Activated CD8-positive, alpha-beta T cell treated with anti-CD3 and anti-CD28 coated beads for 36 hours (primary cell): ENCODE measurements at regions of chr19 and their contacts with region 1.

Region 1: DNA sequence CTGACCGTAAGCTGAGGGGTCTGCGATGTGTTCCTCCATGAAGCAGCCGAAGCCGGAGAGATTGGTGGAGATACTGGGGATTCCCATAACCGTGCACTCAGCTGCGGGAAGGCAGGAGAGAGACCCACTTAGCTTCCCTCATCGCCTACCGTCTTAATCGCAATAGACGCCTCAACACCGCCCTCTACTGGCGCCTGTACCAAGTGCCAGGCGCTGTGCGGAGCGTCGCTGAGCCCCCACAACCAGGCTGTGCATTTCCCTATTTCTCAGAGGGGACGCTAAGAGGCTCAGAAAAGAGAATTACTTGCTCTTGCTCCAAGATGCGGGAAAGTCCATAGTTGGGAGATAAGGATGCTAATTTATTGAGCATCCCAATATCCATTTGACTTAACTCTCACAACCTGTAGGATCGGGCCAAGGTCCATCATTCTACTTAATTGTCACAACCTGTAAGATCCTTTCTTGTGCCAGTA is 5.8 kb downstream of the FTL start:
- DNase-seq: peak; percentile 93
- ATAC-seq: peak; percentile 83
- H3K4me3 Mint-ChIP-seq: no peak overlapping the region
- H3K27ac Mint-ChIP-seq: peak overlapping the region; percentile 46
- H3K4me1 Mint-ChIP-seq: peaks cover 20% of the 10 kb centered on the region
- H3K27me3 Mint-ChIP-seq: no peaks in the 10 kb centered on the region
- CTCF ChIP-seq: peak; percentile 95

Region 2: GRCh38 chr19:48835734-48836088 is 135.2 kb before region 1 on chr19:
- CTCF ChIA-PET with region 1: interaction called, 12 read pairs
- POLR2A ChIA-PET with region 1: no interaction called
- intact Hi-C with region 1: no loop called
- DNase-seq: peak; percentile 100
- ATAC-seq: peak; percentile 88
- H3K4me3 Mint-ChIP-seq: peak overlapping the region; percentile 78
- H3K27ac Mint-ChIP-seq: peak overlapping the region; percentile 86
- H3K4me1 Mint-ChIP-seq: peaks cover 14% of the 10 kb centered on the region
- H3K27me3 Mint-ChIP-seq: peaks cover 5% of the 10 kb centered on the region
- CTCF ChIP-seq: peak; percentile 70

Region 3: DNA sequence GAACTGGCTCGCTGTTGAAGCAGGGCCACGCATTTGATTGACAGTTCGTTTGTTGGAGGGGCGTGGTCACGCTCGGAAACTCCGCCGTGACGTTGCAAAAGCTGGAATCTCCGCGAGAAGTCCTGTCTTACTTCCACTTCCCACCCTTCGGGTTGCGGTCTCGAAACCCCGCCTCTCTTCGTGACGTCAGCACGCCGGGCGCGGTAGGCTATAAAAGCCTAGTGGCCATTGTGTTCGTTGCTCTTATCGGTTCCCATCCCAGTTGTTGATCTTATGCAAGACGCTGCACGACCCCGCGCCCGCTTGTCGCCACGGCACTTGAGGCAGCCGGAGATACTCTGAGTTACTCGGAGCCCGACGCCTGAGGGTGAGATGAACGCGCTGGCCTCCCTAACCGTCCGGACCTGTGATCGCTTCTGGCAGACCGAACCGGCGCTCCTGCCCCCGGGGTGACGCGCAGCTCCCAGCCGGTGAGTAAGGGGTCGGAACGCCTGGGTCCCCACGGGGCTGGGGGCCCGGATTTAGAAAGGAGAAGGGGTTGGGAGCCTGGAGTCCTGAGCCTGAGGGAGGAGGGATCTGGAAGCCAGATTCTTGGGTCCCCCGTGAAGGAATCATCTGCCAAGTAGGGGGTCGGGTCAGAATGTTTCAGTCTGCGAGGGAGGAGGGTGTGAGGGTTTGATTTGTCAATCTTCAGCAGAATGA is 98.6 kb before region 1 on chr19 and contains the start of gene PPP1R15A:
- CTCF ChIA-PET with region 1: interaction called, 18 read pairs
- POLR2A ChIA-PET with region 1: interaction called, 53 read pairs
- intact Hi-C with region 1: loop called (anchors 10 kb)
- DNase-seq: peak; percentile 99
- ATAC-seq: peak; percentile 48
- H3K4me3 Mint-ChIP-seq: peak within 1 kb of the TSS; percentile 99
- H3K27ac Mint-ChIP-seq: peak within 1 kb of the TSS; percentile 100
- H3K4me1 Mint-ChIP-seq: peaks cover 40% of the 10 kb centered on the region
- H3K27me3 Mint-ChIP-seq: peaks cover 2% of the 10 kb centered on the region
- CTCF ChIP-seq: no peak
- total RNA-seq, gene PPP1R15A: 77.8 to 81.2 TPM

Region 4: GRCh38 chr19:48933382-48933932 is 37.5 kb before region 1 on chr19 and contains the start of gene DHDH:
- CTCF ChIA-PET with region 1: interaction called, 16 read pairs
- POLR2A ChIA-PET with region 1: interaction called, 3 read pairs
- intact Hi-C with region 1: no loop called
- DNase-seq: peak; percentile 89
- ATAC-seq: peak; percentile 91
- H3K4me3 Mint-ChIP-seq: peak within 1 kb of the TSS; percentile 77
- H3K27ac Mint-ChIP-seq: peak within 1 kb of the TSS; percentile 46
- H3K4me1 Mint-ChIP-seq: peaks cover 14% of the 10 kb centered on the region
- H3K27me3 Mint-ChIP-seq: peaks cover 3% of the 10 kb centered on the region
- CTCF ChIP-seq: no peak
- total RNA-seq, gene DHDH: 1.4 to 2.8 TPM

Region 5: DNA sequence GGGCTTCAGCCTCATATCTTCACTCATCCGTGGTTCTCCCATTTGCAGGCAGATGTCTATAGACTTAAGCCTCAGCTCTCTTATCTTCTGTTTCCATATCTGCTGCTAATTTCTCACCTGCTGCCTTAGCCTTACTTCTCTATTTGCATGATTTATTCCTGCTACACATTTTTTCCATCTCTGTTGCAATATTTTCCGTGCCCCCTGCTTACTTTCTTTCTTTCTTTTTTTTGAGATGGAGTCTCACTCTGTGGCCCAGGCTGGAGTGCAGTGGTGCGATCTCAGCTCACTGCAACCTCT is 16.4 kb after region 1 on chr19:
- CTCF ChIA-PET with region 1: interaction called, 101 read pairs
- POLR2A ChIA-PET with region 1: interaction called, 8 read pairs
- intact Hi-C with region 1: no loop called
- DNase-seq: no peak
- ATAC-seq: peak; percentile 44
- H3K4me3 Mint-ChIP-seq: no peak overlapping the region
- H3K27ac Mint-ChIP-seq: peak overlapping the region; percentile 70
- H3K4me1 Mint-ChIP-seq: peaks cover 29% of the 10 kb centered on the region
- H3K27me3 Mint-ChIP-seq: no peaks in the 10 kb centered on the region
- CTCF ChIP-seq: no peak

Region 6: GRCh38 chr19:49019242-49019932 is 48.4 kb after region 1 on chr19:
- CTCF ChIA-PET with region 1: no interaction called
- POLR2A ChIA-PET with region 1: no interaction called
- intact Hi-C with region 1: no loop called
- DNase-seq: peak; percentile 68
- ATAC-seq: peak; percentile 52
- H3K4me3 Mint-ChIP-seq: peak overlapping the region; percentile 55
- H3K27ac Mint-ChIP-seq: peak overlapping the region; percentile 36
- H3K4me1 Mint-ChIP-seq: peaks cover 30% of the 10 kb centered on the region
- H3K27me3 Mint-ChIP-seq: peaks cover 9% of the 10 kb centered on the region
- CTCF ChIP-seq: no peak